CD8-positive, alpha-beta T cell (primary cell): ENCODE measurements at regions of chr3 and their contacts with region 1.

Region 1: GRCh38 chr3:160486459-160486869 is 36.9 kb upstream of the TRIM59 start:
- DNase-seq: peak in 2 of 9 experiments; percentile 40 to 57
- ATAC-seq: no peak
- H3K4me3 ChIP-seq: no peak overlapping the region
- H3K4me3 Mint-ChIP-seq: no peak overlapping the region
- H3K27ac ChIP-seq: no peak overlapping the region
- H3K27ac Mint-ChIP-seq: no peak overlapping the region
- H3K4me1 ChIP-seq: no peaks in the 10 kb centered on the region
- H3K4me1 Mint-ChIP-seq: peaks cover 3% of the 10 kb centered on the region
- H3K27me3 ChIP-seq: no peaks in the 10 kb centered on the region
- H3K27me3 Mint-ChIP-seq: peaks cover 9% of the 10 kb centered on the region
- CTCF ChIP-seq: peak; percentile 84

Region 2: DNA sequence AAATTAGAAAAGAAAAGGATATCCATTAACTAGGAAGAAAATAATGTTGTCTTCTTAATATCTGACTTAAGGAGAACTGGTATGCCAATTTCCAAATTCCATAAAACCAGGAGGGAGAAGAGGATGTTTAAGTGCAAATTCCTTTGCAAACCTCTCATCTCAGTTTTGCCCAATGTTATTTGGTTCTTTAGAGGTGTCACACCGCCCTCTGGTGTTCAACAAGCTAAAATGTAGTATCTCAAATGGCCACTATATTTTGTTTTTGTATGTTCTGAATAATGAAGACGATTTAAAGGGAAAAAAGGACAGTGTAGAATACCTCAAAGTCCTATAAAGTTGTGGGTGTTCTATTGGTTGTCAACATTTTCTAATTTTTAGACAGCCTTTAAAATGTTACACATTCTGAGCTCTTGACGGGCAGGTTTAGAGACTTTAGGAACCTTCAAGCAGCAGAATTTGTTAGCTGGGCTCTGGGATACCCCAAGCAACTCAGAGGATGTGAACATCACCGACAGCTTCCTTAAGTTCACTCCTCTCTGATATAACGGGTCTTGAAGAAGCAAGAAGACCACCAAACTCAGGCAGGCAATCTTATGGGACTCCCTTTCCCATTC is 1226.3 kb before region 1 on chr3:
- CTCF ChIA-PET with region 1: no interaction called
- POLR2A ChIA-PET with region 1: no interaction called
- intact Hi-C with region 1: loop called in 1 of 2 experiments (anchors 10 kb)
- DNase-seq: peak in 4 of 9 experiments; percentile 9 to 56 (median 26)
- ATAC-seq: no peak
- H3K4me3 ChIP-seq: no peak overlapping the region
- H3K4me3 Mint-ChIP-seq: no peak overlapping the region
- H3K27ac ChIP-seq: no peak overlapping the region
- H3K27ac Mint-ChIP-seq: no peak overlapping the region
- H3K4me1 ChIP-seq: no peaks in the 10 kb centered on the region
- H3K4me1 Mint-ChIP-seq: no peaks in the 10 kb centered on the region
- H3K27me3 ChIP-seq: no peaks in the 10 kb centered on the region
- H3K27me3 Mint-ChIP-seq: peaks cover 7% of the 10 kb centered on the region
- CTCF ChIP-seq: peak; percentile 59

Region 3: GRCh38 chr3:159988617-159989271 is 497.7 kb before region 1 on chr3 and contains the start of gene IL12A:
- CTCF ChIA-PET with region 1: no interaction called
- POLR2A ChIA-PET with region 1: no interaction called
- intact Hi-C with region 1: loop called (anchors 1 to 5 kb)
- DNase-seq: peak; percentile 68 to 89 (median 84)
- ATAC-seq: peak; percentile 98
- H3K4me3 ChIP-seq: peak within 1 kb of the TSS; percentile 70 to 74
- H3K4me3 Mint-ChIP-seq: peak within 1 kb of the TSS; percentile 87
- H3K27ac ChIP-seq: peak within 1 kb of the TSS; percentile 25 to 28
- H3K27ac Mint-ChIP-seq: peak within 1 kb of the TSS; percentile 27
- H3K4me1 ChIP-seq: peaks cover 15% of the 10 kb centered on the region
- H3K4me1 Mint-ChIP-seq: peaks cover 30% of the 10 kb centered on the region
- H3K27me3 ChIP-seq: no peaks in the 10 kb centered on the region
- H3K27me3 Mint-ChIP-seq: no peaks in the 10 kb centered on the region
- CTCF ChIP-seq: peak; percentile 86
- total RNA-seq, gene IL12A: 2.3 to 2.9 TPM

Region 4: DNA sequence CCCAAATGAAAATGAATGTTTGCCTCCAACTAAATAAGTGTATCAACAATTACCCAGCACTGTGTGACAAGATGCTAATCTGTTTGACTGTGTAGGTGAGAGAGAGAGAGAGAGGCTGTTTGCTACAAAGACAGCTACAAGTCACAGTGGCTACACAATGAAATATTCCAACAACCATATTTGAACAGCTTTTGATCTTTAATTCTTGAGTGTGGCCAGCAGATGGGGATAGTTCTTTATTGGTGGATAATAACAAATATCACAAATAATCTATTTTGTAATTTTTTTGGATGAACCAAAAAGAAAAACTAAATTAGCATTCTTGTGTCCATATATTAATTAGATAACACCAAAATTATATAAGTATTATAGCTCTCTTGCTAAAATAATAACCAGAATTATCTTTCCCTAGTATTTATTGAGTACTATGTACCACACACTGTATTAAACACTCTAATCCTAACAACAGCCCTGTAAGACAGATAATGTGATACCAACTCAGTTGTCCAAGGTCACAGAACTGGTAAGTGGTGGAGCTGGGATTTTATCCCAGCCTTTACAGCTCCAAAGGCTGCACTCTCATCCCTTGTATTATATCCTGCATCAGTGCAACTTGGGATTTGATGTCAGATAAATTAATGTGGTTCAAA is 323.1 kb before region 1 on chr3:
- CTCF ChIA-PET with region 1: no interaction called
- POLR2A ChIA-PET with region 1: no interaction called
- intact Hi-C with region 1: loop called (anchors 2 to 5 kb)
- DNase-seq: peak in 2 of 9 experiments; percentile 10 to 27
- ATAC-seq: no peak
- H3K4me3 ChIP-seq: no peak overlapping the region
- H3K4me3 Mint-ChIP-seq: no peak overlapping the region
- H3K27ac ChIP-seq: no peak overlapping the region
- H3K27ac Mint-ChIP-seq: no peak overlapping the region
- H3K4me1 ChIP-seq: no peaks in the 10 kb centered on the region
- H3K4me1 Mint-ChIP-seq: no peaks in the 10 kb centered on the region
- H3K27me3 ChIP-seq: no peaks in the 10 kb centered on the region
- H3K27me3 Mint-ChIP-seq: no peaks in the 10 kb centered on the region
- CTCF ChIP-seq: no peak

Region 5: DNA sequence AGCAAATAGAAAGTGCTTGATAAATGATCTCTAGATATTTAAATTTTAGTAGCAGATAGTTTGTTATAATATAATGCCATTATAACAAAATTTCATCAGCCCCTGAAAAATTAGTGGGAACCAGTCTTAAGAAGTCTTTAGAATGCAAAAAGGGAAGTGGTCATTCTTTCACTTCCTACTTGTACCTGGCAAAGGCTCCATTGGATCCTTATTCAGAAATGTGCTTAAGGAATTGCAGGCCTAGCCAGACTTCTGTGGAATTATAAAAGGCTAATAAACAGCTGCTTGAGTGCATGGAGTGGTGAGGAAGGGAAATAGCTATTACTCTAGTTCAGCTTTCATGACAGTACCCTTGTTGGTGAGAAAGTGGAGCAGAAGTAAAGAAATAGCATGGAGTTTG is 293.8 kb after region 1 on chr3:
- CTCF ChIA-PET with region 1: no interaction called
- POLR2A ChIA-PET with region 1: no interaction called
- intact Hi-C with region 1: no loop called
- DNase-seq: no peak
- ATAC-seq: no peak
- H3K4me3 ChIP-seq: no peak overlapping the region
- H3K4me3 Mint-ChIP-seq: no peak overlapping the region
- H3K27ac ChIP-seq: no peak overlapping the region
- H3K27ac Mint-ChIP-seq: no peak overlapping the region
- H3K4me1 ChIP-seq: no peaks in the 10 kb centered on the region
- H3K4me1 Mint-ChIP-seq: no peaks in the 10 kb centered on the region
- H3K27me3 ChIP-seq: no peaks in the 10 kb centered on the region
- H3K27me3 Mint-ChIP-seq: peaks cover 1% of the 10 kb centered on the region
- CTCF ChIP-seq: no peak